B cell (primary cell): ENCODE measurements at regions of chr12 and their contacts with region 1.

Region 1: GRCh38 chr12:51262758-51263177 is 7.4 kb downstream of the SMAGP start:
- DNase-seq: peak; percentile 58
- ATAC-seq: peak; percentile 45
- H3K4me3 ChIP-seq: no peak overlapping the region
- H3K4me3 Mint-ChIP-seq: no peak overlapping the region
- H3K27ac ChIP-seq: no peak overlapping the region
- H3K27ac Mint-ChIP-seq: no peak overlapping the region
- H3K4me1 ChIP-seq: peaks cover 0 to 5% of the 10 kb centered on the region in 2 donors
- H3K4me1 Mint-ChIP-seq: peaks cover 16% of the 10 kb centered on the region
- H3K27me3 ChIP-seq: no peaks in the 10 kb centered on the region
- H3K27me3 Mint-ChIP-seq: no peaks in the 10 kb centered on the region
- CTCF ChIP-seq: peak; percentile 41

Region 2: GRCh38 chr12:51293696-51294095 is 30.9 kb after region 1 on chr12:
- CTCF ChIA-PET with region 1: interaction called, 13 read pairs
- POLR2A ChIA-PET with region 1: no interaction called
- intact Hi-C with region 1: no loop called
- DNase-seq: no peak
- ATAC-seq: no peak
- H3K4me3 ChIP-seq: no peak overlapping the region
- H3K4me3 Mint-ChIP-seq: no peak overlapping the region
- H3K27ac ChIP-seq: no peak overlapping the region
- H3K27ac Mint-ChIP-seq: no peak overlapping the region
- H3K4me1 ChIP-seq: peaks cover 0 to 8% of the 10 kb centered on the region in 2 donors
- H3K4me1 Mint-ChIP-seq: peaks cover 11% of the 10 kb centered on the region
- H3K27me3 ChIP-seq: no peaks in the 10 kb centered on the region
- H3K27me3 Mint-ChIP-seq: no peaks in the 10 kb centered on the region
- CTCF ChIP-seq: no peak